Activated naive CD4-positive, alpha-beta T cell treated with anti-CD3 and anti-CD28 coated beads for 36 hours (primary cell): ENCODE measurements at regions of chr5 and their contacts with region 1.

Region 1: GRCh38 chr5:115098041-115098702 is 71.5 kb downstream of the TRIM36 start:
- DNase-seq: peak; percentile 39
- H3K4me3 Mint-ChIP-seq: no peak overlapping the region
- H3K27ac Mint-ChIP-seq: no peak overlapping the region
- H3K4me1 Mint-ChIP-seq: no peaks in the 10 kb centered on the region
- H3K27me3 Mint-ChIP-seq: peaks cover 7% of the 10 kb centered on the region

Region 2: GRCh38 chr5:115064380-115064779 is 33.8 kb before region 1 on chr5:
- CTCF ChIA-PET with region 1: no interaction called
- intact Hi-C with region 1: no loop called
- DNase-seq: no peak
- H3K4me3 Mint-ChIP-seq: no peak overlapping the region
- H3K27ac Mint-ChIP-seq: no peak overlapping the region
- H3K4me1 Mint-ChIP-seq: peaks cover 7% of the 10 kb centered on the region
- H3K27me3 Mint-ChIP-seq: peaks cover 4% of the 10 kb centered on the region

Region 3: GRCh38 chr5:115246361-115246991 is 148.3 kb after region 1 on chr5:
- CTCF ChIA-PET with region 1: interaction called, 29 read pairs
- intact Hi-C with region 1: loop called (anchors 1 kb)
- DNase-seq: no peak
- H3K4me3 Mint-ChIP-seq: no peak overlapping the region
- H3K27ac Mint-ChIP-seq: no peak overlapping the region
- H3K4me1 Mint-ChIP-seq: peaks cover 25% of the 10 kb centered on the region
- H3K27me3 Mint-ChIP-seq: no peaks in the 10 kb centered on the region

Region 4: GRCh38 chr5:115579747-115580173 is 481.6 kb after region 1 on chr5:
- CTCF ChIA-PET with region 1: no interaction called
- intact Hi-C with region 1: loop called (anchors 2 kb)
- DNase-seq: no peak
- H3K4me3 Mint-ChIP-seq: no peak overlapping the region
- H3K27ac Mint-ChIP-seq: no peak overlapping the region
- H3K4me1 Mint-ChIP-seq: no peaks in the 10 kb centered on the region
- H3K27me3 Mint-ChIP-seq: no peaks in the 10 kb centered on the region

Region 5: DNA sequence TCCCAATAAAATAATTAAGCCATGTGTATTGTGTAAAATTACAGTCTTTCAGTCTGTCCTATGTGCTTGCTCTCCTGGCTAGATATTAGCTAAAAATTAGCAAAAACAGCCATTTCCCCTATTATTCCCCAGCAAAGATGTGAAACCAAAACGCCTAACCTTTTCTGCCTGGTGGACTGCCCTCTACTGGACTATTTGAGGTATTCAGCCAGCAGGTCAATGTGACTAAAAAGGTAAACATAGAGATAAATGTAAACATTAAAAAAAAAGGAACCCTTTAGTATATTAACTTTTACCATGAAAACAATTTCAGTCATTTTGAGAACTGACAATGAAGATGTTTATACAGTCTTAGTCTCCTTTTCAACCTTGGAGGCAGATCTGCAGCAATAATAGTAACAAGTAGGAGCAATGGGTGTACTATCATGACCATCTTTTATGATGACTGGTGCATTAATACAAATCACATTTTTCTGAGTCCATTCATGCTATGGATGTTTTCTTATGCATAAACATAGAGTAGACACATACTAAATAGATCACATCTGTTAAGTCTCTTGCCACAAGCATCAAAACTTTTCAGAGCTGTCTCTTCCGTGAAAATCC is 733.1 kb after region 1 on chr5:
- CTCF ChIA-PET with region 1: no interaction called
- intact Hi-C with region 1: loop called (anchors 5 kb)
- DNase-seq: peak; percentile 27
- H3K4me3 Mint-ChIP-seq: no peak overlapping the region
- H3K27ac Mint-ChIP-seq: no peak overlapping the region
- H3K4me1 Mint-ChIP-seq: peaks cover 5% of the 10 kb centered on the region
- H3K27me3 Mint-ChIP-seq: no peaks in the 10 kb centered on the region